ENCODE measurements at regions of chr3 and their contacts with region 1.

Region 1: DNA sequence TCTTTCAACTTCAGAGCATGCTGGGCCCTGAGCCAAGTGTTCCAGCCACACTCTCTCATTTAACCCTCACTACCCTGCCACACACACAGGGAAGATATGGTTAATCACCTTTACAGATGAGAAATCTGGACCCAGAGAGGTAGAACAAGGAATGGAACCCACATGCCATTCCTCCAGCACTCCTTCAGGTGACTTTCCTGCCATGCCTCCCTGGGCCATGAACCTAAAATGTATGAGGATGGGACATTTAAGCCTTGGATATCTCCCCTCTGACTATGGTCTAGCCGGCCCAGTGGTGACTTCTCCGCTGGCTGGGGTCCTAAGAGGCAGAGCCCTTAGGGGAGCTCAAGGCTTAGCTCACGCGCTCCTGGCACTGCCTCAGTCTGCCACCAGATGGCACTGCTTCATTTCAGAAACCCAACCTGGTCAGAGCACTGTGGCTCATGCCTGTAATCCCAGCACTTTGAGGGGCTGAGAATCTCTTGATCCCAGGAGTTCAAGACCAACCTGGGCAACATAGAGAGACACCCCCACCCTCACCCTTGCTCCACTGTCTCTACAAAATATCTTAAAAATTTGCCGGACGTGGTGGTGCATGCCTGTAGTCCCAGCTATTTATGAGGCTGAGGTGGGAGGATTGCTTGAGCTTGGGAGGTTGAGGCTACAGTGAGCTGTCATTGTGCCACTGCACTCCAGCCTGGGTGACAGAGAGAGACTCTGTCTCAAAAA is 2.2 kb upstream of the DCAF1 start:
- DNase-seq: peak; percentile 83 to 92
- H3K4me3 ChIP-seq: no peak overlapping the region
- H3K27ac ChIP-seq: peak overlapping the region in 1 of 5 donors; percentile 99
- H3K4me1 ChIP-seq: peaks cover 0 to 28% (median 15%) of the 10 kb centered on the region in 4 donors
- H3K27me3 ChIP-seq: no peaks in the 10 kb centered on the region
- CTCF ChIP-seq: peak in 5 of 7 experiments; percentile 79 to 97 (median 93)
- EP300 ChIP-seq: no peak
- POLR2A ChIP-seq: no peak

Region 2: DNA sequence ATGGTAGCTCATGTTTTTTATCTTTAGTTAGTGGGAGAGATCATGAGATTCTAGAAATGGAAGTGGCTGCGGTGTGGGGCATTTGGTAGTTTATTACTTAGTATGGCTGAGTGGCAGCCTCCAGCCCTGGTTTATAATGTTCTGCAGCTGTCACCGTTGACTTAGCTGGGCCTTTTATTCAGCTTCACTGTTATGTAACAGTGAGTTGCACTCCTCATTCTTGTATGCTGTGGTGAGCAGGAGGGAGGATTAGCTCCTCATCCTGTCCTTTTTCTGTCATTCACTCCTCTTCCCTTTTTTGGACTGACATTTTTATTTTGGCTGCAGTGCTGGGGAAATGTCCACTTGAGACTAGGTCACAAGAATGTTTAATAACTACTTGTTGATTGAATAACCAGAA is 66.0 kb after region 1 on chr3:
- intact Hi-C with region 1: no loop called
- DNase-seq: no peak
- H3K4me3 ChIP-seq: no peak overlapping the region
- H3K27ac ChIP-seq: peak overlapping the region in 1 of 5 donors; percentile 13
- H3K4me1 ChIP-seq: peaks cover 3 to 58% (median 26%) of the 10 kb centered on the region in 4 donors
- H3K27me3 ChIP-seq: no peaks in the 10 kb centered on the region
- CTCF ChIP-seq: no peak
- EP300 ChIP-seq: no peak
- POLR2A ChIP-seq: no peak

Region 3: GRCh38 chr3:51669241-51670052 is 167.4 kb after region 1 on chr3:
- intact Hi-C with region 1: loop called (anchors 5 kb)
- DNase-seq: peak; percentile 94 to 95
- H3K4me3 ChIP-seq: no peak overlapping the region
- H3K27ac ChIP-seq: peak overlapping the region in 4 of 5 donors; percentile 25 to 97 (median 91)
- H3K4me1 ChIP-seq: peaks cover 41 to 52% (median 49%) of the 10 kb centered on the region in 4 donors
- H3K27me3 ChIP-seq: no peaks in the 10 kb centered on the region
- CTCF ChIP-seq: peak in 6 of 7 experiments; percentile 66 to 97 (median 96)
- EP300 ChIP-seq: no peak
- POLR2A ChIP-seq: no peak

Region 4: DNA sequence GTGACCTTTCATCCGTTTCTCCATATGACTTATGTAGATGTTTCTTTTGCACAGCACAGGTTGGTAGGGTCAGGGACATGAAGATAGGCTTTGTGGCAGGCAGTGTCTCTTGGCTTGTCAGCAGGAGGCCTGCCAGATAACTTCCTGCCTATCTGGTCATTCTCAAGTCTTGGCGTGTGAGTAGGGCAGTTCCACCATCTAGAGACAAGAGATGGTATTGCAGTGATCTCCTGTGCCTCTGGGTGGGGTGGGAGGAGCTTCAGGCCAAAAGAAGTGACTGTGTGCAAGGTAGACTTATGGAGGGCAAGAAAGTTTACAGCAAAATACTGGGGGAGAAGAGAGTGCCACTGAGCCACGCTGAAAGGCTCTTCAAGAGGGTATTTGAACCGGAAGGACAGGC is 180.1 kb after region 1 on chr3:
- intact Hi-C with region 1: loop called (anchors 5 kb)
- DNase-seq: peak; percentile 56 to 91
- H3K4me3 ChIP-seq: no peak overlapping the region
- H3K27ac ChIP-seq: peak overlapping the region in 3 of 5 donors; percentile 16 to 50 (median 32)
- H3K4me1 ChIP-seq: peaks cover 18 to 74% (median 46%) of the 10 kb centered on the region in 4 donors
- H3K27me3 ChIP-seq: no peaks in the 10 kb centered on the region
- CTCF ChIP-seq: peak in 5 of 7 experiments; percentile 58 to 79 (median 75)
- EP300 ChIP-seq: no peak
- POLR2A ChIP-seq: no peak

Region 5: DNA sequence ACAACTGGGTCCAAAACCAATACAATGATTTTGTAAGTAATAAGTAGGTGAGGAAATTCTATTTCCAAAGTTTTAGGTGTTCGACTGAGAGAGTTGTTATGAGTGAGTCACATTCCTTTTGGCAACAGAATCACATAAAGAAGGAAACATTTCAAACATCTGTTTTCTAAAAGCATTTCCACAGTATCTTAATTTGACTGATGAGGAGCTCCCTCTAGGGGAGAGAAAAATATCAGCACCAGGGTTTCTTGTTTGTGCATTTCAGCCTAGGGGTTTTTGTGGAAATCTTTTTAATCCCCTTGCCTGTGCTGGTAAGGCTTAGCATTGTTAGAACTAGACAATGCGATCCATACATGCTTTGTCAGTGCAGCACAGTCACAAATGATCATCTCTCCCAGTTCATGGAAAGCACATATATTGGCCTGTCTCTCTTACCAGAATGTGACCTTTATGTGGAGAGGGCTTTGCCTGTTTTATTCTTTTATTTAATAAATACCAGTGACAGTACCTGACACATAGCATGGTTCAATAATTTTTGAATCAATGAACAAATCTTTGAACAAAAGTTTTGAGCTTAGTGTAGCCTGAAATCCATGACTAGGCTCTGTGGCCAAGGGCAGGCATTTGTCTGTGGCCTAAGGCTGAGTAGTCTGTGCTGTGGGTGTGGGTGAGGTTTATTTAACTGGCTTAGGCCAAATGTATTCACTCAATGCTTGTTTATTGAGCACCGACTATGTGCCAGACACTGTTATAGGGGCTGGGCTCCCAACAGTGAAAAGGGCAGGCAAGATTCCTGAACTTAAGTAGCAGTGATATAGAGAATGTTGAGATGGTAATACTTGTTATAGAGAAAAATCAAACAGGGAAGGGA is 298.1 kb after region 1 on chr3:
- intact Hi-C with region 1: loop called (anchors 5 kb)
- DNase-seq: peak in 1 of 2 donors; percentile 74
- H3K4me3 ChIP-seq: no peak overlapping the region
- H3K27ac ChIP-seq: no peak overlapping the region
- H3K4me1 ChIP-seq: peaks cover 0 to 4% (median 0%) of the 10 kb centered on the region in 4 donors
- H3K27me3 ChIP-seq: peaks cover 0 to 16% (median 0%) of the 10 kb centered on the region in 3 donors
- CTCF ChIP-seq: peak in 5 of 7 experiments; percentile 60 to 71 (median 65)
- EP300 ChIP-seq: no peak
- POLR2A ChIP-seq: no peak

Measured in stomach (tissue), 19 donors.